Right ventricle myocardium inferior (tissue), 1 donor: ENCODE measurements at regions of chr1 and their contacts with region 1.

Region 1: GRCh38 chr1:61049850-61050540 is 32.4 kb upstream of the NFIA start:
- DNase-seq: peak; percentile 96
- ATAC-seq: peak; percentile 85

Region 2: GRCh38 chr1:61077676-61078541 is 27.9 kb after region 1 on chr1:
- intact Hi-C with region 1: loop called (anchors 1 kb)
- DNase-seq: peak; percentile 95
- ATAC-seq: peak; percentile 80

Region 3: GRCh38 chr1:61184040-61184713 is 134.2 kb after region 1 on chr1:
- intact Hi-C with region 1: loop called (anchors 5 kb)
- DNase-seq: peak; percentile 95
- ATAC-seq: peak; percentile 90

Region 4: GRCh38 chr1:61368876-61369275 is 318.9 kb after region 1 on chr1:
- intact Hi-C with region 1: no loop called
- DNase-seq: no peak
- ATAC-seq: peak; percentile 84

Region 5: GRCh38 chr1:61453111-61453961 is 403.3 kb after region 1 on chr1:
- intact Hi-C with region 1: loop called (anchors 1 kb)
- DNase-seq: peak; percentile 90
- ATAC-seq: peak; percentile 77

Region 6: DNA sequence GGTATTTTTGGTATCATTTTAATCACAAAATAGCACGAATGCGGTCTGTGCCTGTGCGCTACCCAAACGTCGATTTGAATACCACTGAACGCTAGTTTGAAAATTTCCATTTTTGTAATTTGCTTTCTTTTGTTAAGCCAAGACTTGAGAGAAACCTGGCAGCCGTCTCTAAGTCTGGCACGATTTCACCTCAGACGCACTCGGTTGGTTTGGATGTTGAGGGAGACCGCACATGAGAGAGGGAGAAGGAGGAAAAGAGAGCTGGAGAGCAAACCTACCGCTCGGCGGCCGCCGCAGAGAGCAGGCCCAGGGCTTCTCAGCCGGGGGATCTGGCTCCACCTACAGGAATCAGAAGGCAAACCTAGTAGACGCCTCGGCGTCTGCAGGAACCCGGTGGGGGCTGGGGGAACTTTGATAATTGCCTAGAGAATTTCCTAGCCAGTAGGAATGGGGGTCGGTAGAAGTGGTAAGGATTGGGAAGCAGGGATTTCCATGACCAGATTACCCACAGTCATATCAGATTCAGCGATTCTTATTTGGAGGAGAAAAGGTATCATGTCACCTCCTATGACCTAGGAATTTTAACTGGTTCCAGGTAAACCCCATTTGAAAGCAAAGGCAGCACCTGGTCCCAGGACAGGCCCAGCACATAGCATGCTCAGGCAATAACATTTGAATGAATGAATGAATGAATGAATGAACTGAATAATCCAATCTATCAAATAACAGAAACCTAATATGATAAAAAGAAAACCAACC is 591.8 kb after region 1 on chr1:
- intact Hi-C with region 1: loop called (anchors 2 kb)
- DNase-seq: peak; percentile 92
- ATAC-seq: peak; percentile 79

Region 7: GRCh38 chr1:61851849-61852669 is 802.1 kb after region 1 on chr1:
- intact Hi-C with region 1: loop called (anchors 5 kb)
- DNase-seq: no peak
- ATAC-seq: peak; percentile 51